Activated naive CD4-positive, alpha-beta T cell treated with anti-CD3 and anti-CD28 coated beads for 36 hours (primary cell): ENCODE measurements at regions of chr12 and their contacts with region 1.

Region 1: GRCh38 chr12:12032851-12033588 is 37.7 kb upstream of the BCL2L14 start:
- DNase-seq: peak; percentile 86
- H3K4me3 Mint-ChIP-seq: peak overlapping the region; percentile 66
- H3K27ac Mint-ChIP-seq: peak overlapping the region; percentile 78
- H3K4me1 Mint-ChIP-seq: peaks cover 46% of the 10 kb centered on the region
- H3K27me3 Mint-ChIP-seq: no peaks in the 10 kb centered on the region

Region 2: GRCh38 chr12:11486623-11487444 is 546.2 kb before region 1 on chr12:
- CTCF ChIA-PET with region 1: interaction called, 3 read pairs
- intact Hi-C with region 1: loop called (anchors 5 kb)
- DNase-seq: peak; percentile 93
- H3K4me3 Mint-ChIP-seq: no peak overlapping the region
- H3K27ac Mint-ChIP-seq: no peak overlapping the region
- H3K4me1 Mint-ChIP-seq: peaks cover 4% of the 10 kb centered on the region
- H3K27me3 Mint-ChIP-seq: peaks cover 3% of the 10 kb centered on the region

Region 3: DNA sequence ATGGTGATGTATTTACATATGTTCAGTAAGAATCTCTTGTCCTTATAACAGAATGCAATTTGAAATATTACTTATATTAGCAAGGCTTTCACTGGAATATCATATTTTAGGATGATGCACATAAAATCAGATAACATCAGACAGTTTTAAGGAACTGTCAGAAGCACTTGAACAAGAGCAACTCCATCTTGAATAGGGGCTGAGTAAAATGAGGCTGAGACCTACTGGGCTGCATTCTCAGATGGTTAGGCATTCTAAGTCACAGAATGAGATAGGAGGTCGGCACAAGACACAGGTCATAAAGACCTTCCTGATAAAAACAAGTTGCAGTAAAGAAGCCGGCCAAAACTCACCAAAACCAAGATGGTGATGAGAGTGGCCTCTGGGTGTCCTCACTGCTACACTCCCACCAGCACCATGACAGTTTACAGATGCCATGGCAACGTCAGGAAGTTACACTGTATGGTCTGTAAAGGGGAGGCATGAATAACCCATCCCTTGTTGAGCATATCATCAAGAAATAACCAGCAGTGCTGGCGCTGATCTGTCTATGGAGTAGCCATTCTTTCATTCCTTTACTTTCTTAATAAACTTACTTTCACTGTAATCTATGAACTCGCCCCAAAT is 411.1 kb before region 1 on chr12:
- CTCF ChIA-PET with region 1: interaction called, 9 read pairs
- intact Hi-C with region 1: loop called (anchors 1 kb)
- DNase-seq: peak; percentile 55
- H3K4me3 Mint-ChIP-seq: no peak overlapping the region
- H3K27ac Mint-ChIP-seq: no peak overlapping the region
- H3K4me1 Mint-ChIP-seq: peaks cover 2% of the 10 kb centered on the region
- H3K27me3 Mint-ChIP-seq: no peaks in the 10 kb centered on the region

Region 4: GRCh38 chr12:11780521-11781101 is 252.4 kb before region 1 on chr12:
- CTCF ChIA-PET with region 1: interaction called, 15 read pairs
- intact Hi-C with region 1: no loop called
- DNase-seq: peak; percentile 68
- H3K4me3 Mint-ChIP-seq: peak overlapping the region; percentile 2
- H3K27ac Mint-ChIP-seq: peak overlapping the region; percentile 85
- H3K4me1 Mint-ChIP-seq: peaks cover 74% of the 10 kb centered on the region
- H3K27me3 Mint-ChIP-seq: no peaks in the 10 kb centered on the region

Region 5: GRCh38 chr12:11916771-11917170 is 116.2 kb before region 1 on chr12:
- CTCF ChIA-PET with region 1: interaction called, 4 read pairs
- intact Hi-C with region 1: loop called (anchors 2 kb)
- DNase-seq: no peak
- H3K4me3 Mint-ChIP-seq: no peak overlapping the region
- H3K27ac Mint-ChIP-seq: no peak overlapping the region
- H3K4me1 Mint-ChIP-seq: no peaks in the 10 kb centered on the region
- H3K27me3 Mint-ChIP-seq: no peaks in the 10 kb centered on the region

Region 6: DNA sequence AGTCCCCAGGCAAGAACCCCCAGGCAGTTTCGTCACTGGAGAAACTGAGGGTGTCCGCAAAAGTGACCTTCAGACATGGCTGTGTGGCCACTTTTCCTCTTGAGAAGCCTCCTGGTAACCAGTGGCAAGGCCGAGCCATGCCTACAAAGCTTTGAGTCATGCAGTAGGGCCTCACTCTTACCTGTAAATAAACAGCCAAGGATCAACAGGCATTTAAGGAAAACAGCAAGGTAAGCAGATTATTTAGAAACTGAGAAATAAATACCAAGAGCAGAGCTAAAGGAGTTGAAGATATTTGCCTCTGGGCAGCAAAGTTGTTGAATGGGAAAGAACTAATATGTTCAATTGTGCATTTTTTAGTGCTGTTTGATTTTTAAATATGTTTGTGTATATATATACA is 103.3 kb before region 1 on chr12:
- CTCF ChIA-PET with region 1: no interaction called
- intact Hi-C with region 1: no loop called
- DNase-seq: no peak
- H3K4me3 Mint-ChIP-seq: no peak overlapping the region
- H3K27ac Mint-ChIP-seq: no peak overlapping the region
- H3K4me1 Mint-ChIP-seq: peaks cover 5% of the 10 kb centered on the region
- H3K27me3 Mint-ChIP-seq: no peaks in the 10 kb centered on the region

Region 7: DNA sequence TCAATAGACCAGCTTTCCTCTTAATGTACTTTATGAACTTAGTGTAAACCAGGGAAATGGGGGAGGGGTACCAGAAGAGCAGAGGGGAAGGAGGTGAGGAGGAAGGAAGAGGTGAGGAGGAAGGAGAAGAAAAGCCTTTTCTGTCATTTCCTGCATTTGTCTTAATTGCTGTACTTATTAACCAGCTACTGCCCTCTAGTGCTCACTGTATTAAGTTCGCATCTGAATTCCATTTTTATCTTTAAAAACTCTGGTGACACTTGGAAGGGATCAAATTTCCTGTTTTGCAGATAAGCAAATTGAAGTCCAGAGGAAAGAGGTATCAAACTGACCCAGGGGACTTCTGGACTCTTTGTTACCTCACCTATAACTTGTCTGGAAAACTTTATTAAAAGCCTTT is 294.8 kb after region 1 on chr12:
- CTCF ChIA-PET with region 1: interaction called, 36 read pairs
- intact Hi-C with region 1: loop called (anchors 1 kb)
- DNase-seq: peak; percentile 27
- H3K4me3 Mint-ChIP-seq: no peak overlapping the region
- H3K27ac Mint-ChIP-seq: peak overlapping the region; percentile 36
- H3K4me1 Mint-ChIP-seq: peaks cover 6% of the 10 kb centered on the region
- H3K27me3 Mint-ChIP-seq: no peaks in the 10 kb centered on the region

Region 8: DNA sequence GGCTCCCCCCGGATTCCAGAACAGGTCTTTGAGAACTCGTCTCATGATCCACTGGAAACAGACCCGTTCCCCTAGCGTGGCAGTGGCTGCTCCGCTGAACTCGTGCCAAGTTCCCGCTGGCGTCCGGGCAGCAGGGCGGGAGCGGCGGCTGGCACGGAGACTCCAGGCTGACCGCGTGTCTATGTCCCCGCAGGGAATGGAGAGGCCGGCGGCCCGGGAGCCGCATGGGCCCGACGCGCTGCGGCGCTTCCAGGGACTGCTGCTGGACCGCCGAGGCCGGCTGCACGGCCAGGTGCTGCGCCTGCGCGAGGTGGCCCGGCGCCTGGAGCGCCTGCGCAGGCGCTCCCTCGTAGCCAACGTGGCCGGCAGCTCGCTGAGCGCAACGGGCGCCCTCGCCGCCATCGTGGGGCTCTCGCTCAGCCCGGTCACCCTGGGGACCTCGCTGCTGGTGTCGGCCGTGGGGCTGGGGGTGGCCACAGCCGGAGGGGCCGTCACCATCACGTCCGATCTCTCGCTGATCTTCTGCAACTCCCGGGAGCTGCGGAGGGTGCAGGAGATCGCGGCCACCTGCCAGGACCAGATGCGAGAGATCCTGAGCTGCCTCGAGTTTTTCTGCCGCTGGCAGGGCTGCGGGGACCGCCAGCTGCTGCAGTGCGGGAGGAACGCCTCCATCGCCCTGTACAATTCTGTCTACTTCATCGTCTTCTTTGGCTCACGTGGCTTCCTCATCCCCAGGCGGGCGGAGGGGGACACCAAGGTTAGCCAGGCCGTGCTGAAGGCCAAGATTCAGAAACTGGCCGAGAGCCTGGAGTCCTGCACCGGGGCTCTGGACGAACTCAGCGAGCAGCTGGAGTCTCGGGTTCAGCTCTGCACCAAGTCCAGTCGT is 753.9 kb after region 1 on chr12:
- CTCF ChIA-PET with region 1: no interaction called
- intact Hi-C with region 1: no loop called
- DNase-seq: peak; percentile 67
- H3K4me3 Mint-ChIP-seq: peak overlapping the region; percentile 83
- H3K27ac Mint-ChIP-seq: peak overlapping the region; percentile 84
- H3K4me1 Mint-ChIP-seq: peaks cover 27% of the 10 kb centered on the region
- H3K27me3 Mint-ChIP-seq: no peaks in the 10 kb centered on the region